ENCODE measurements at regions of chr9 and their contacts with region 1.

Region 1: GRCh38 chr9:638152-638551 is 203.3 kb upstream of the DMRT1 start:
- DNase-seq: no peak
- H3K4me3 Mint-ChIP-seq: no peak overlapping the region
- H3K27ac Mint-ChIP-seq: no peak overlapping the region
- H3K4me1 Mint-ChIP-seq: peaks cover 8% of the 10 kb centered on the region
- H3K27me3 Mint-ChIP-seq: no peaks in the 10 kb centered on the region

Region 2: GRCh38 chr9:677461-678097 is 39.4 kb after region 1 on chr9:
- intact Hi-C with region 1: loop called (anchors 5 kb)
- DNase-seq: peak; percentile 58
- H3K4me3 Mint-ChIP-seq: peak overlapping the region; percentile 80
- H3K27ac Mint-ChIP-seq: no peak overlapping the region
- H3K4me1 Mint-ChIP-seq: peaks cover 17% of the 10 kb centered on the region
- H3K27me3 Mint-ChIP-seq: peaks cover 4% of the 10 kb centered on the region

Region 3: GRCh38 chr9:706606-707459 is 68.7 kb after region 1 on chr9:
- intact Hi-C with region 1: no loop called
- DNase-seq: peak; percentile 77
- H3K4me3 Mint-ChIP-seq: peak overlapping the region; percentile 87
- H3K27ac Mint-ChIP-seq: peak overlapping the region; percentile 78
- H3K4me1 Mint-ChIP-seq: peaks cover 10% of the 10 kb centered on the region
- H3K27me3 Mint-ChIP-seq: peaks cover 18% of the 10 kb centered on the region